ENCODE measurements at regions of chr16 and their contacts with region 1.

Region 1: DNA sequence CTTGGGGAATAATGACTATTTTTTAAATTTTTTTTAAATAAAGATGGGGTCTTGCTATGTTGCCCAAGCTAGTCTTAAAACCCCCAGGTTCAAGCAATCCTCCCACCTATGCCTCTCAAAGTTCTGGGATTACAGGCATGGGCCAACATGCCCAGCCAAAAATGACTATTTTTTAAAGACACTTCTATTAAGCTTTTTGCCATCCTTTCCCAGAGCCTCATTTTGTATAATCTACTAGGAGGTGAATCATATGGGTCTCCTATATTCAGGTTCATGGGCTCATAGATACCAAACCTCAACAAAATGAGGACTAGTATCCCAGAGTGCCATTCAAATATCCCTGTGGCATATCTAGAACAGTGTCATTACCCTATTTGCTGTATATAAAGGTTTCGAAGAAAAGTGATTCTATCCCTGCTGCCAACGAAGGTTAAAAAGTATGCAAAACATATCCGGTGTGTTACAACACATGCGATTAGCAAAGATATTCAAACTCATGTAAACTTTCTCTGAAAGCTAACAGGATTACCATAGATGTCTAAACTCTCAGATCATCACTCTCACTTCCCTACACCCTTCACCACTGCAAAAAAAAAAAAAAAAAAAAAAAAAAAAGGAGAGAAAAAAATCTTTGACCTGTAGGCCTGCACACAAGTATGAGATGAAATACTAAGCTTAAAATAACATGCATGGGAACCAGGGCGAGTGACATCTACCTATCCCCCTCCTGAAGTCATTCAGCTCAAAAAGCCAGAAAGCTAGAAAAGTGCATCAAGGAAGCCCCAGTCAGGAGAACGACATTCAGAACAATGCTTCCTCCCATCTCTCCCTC is 23.5 kb downstream of the XPO6 start:
- DNase-seq: peak; percentile 59
- CTCF ChIP-seq: no peak

Region 2: DNA sequence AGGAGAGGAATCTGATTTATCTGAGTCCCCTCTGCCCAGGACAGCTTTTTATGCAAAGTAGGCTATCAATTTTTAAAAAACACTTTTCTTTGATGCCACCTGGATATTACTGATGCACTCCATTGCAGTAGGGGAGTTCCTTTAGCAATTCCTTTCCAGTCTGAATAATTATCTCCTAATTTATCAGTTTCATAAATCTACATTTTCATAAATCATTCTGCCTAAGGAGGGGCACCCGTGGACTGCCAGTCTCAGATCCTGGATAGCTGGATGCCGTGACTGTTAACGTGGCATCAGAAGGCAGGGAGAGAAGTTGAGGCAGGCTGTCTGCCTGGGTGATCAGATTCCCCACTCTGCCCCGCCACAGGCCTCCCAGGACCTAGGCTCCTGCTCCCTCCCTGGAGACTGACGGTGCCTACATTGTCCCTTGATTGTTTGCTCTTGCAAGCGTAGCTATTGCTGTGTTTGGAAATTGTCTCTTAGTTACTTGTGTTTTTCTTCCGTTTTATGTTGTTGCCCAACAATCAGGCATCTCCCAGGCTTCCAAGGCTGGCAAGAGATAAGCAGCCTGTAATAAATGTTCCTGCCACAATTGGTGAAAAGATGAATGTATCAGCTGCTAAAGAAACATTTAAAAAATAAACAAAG is 563.1 kb before region 1 on chr16:
- in situ Hi-C with region 1: no loop called
- DNase-seq: no peak
- CTCF ChIP-seq: no peak

Region 3: GRCh38 chr16:28149011-28149888 is 39.1 kb before region 1 on chr16:
- in situ Hi-C with region 1: loop called (anchors 5 kb)
- DNase-seq: no peak
- CTCF ChIP-seq: no peak